Upper lobe of right lung (tissue), 1 donor: ENCODE measurements at regions of chr16 and their contacts with region 1.

Region 1: GRCh38 chr16:2415085-2415484 is 14.2 kb upstream of the CCNF start:
- DNase-seq: no peak
- ATAC-seq: no peak
- H3K4me3 ChIP-seq: no peak overlapping the region
- H3K27ac ChIP-seq: no peak overlapping the region
- H3K4me1 ChIP-seq: no peaks in the 10 kb centered on the region
- H3K27me3 ChIP-seq: peaks cover 36% of the 10 kb centered on the region
- CTCF ChIP-seq: no peak

Region 2: DNA sequence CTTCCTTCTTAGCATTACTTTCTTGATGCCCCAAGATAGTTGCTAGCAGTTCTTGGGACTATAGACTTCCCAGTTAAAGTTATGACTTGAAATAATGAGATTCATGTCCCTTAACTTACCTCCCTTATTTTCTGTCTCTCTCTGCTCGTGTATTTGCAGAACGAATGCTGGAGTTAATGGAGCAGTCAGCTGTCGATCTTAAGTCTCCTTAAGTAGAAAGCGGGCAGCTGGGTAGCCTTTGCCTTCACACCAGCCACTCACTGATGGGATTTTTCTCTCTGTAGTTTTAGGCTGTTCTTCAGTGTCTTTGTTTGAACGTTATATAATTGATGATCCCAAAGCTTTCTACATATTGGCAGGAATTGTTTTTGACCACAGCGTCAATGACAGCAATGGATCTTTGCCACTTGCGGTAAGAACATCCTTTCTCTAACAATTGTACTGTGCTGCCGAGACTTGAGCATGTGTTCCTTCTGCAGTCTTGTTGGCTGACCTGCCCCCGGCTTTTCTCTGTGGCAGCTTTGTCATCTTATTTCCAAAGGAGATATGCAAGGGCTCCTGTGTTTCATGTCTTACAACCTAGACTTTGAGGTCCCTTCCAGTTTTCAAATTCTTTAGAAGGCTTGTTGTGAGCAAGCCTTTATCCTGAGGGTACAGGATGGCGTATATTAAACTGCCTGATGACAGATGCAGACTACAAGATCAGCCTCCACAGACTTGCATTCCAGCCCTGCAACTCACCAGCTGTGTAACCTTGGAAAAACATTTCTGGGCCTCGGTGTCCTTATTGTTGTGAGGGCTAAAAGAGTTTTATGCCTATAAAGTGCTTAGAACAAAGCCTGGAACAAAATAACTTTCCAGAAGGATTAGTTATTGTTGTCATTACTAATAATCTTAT is 49.4 kb before region 1 on chr16:
- intact Hi-C with region 1: loop called (anchors 10 kb)
- DNase-seq: no peak
- ATAC-seq: no peak
- H3K4me3 ChIP-seq: no peak overlapping the region
- H3K27ac ChIP-seq: no peak overlapping the region
- H3K4me1 ChIP-seq: no peaks in the 10 kb centered on the region
- H3K27me3 ChIP-seq: peaks cover 15% of the 10 kb centered on the region
- CTCF ChIP-seq: no peak

Region 3: DNA sequence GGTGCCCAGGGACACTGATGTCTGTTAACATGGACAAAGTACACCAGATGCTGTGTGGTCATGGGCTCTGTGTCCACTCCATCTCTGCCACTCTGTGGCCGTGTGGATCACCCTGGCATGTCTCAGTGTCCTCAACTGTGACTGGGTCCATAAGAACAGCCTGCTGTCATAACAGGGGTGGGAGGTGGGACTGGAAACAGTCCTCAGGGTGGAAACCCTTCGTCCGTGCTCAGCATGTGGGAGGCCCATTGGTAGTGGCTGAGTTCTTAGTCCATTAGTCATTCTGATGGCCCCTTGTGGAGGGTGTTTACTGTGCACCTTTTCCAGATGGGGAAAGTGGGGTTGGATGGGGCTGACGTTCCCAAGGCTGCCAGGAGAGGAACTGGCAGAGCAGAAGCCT is 480.7 kb after region 1 on chr16:
- intact Hi-C with region 1: no loop called
- DNase-seq: no peak
- ATAC-seq: no peak
- H3K4me3 ChIP-seq: no peak overlapping the region
- H3K27ac ChIP-seq: no peak overlapping the region
- H3K4me1 ChIP-seq: peaks cover 5% of the 10 kb centered on the region
- H3K27me3 ChIP-seq: no peaks in the 10 kb centered on the region
- CTCF ChIP-seq: no peak